Natural killer cell (primary cell): ENCODE measurements at regions of chr11 and their contacts with region 1.

Region 1: DNA sequence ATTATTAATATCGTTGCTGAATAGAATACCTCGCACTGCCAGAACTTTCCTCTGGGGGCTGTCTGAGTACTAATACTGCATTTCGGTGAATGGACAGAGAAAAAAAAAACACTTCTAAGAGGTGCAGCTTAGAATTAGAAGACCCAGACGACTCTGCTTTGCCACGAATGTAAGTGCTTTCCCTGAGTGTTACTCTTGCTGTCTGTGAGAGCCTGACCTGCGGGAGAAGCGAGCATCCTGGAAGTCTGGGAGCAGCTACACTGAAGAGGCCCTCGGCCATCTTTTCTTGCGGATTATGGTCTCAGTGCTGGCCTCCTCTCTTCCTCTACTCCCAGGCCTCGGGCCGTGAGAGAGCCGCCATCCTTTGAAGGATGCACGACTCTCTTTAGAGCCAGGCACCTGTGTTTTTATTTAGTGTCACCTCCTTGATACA is 94.9 kb downstream of the SCN3B start:
- DNase-seq: no peak
- ATAC-seq: peak in 2 of 3 donors; percentile 29 to 37
- H3K4me3 ChIP-seq: no peak overlapping the region
- H3K4me3 Mint-ChIP-seq: peak overlapping the region; percentile 87
- H3K27ac ChIP-seq: no peak overlapping the region
- H3K27ac Mint-ChIP-seq: peak overlapping the region; percentile 2 to 12
- H3K4me1 ChIP-seq: peaks cover 16% of the 10 kb centered on the region
- H3K4me1 Mint-ChIP-seq: peaks cover 13 to 14% of the 10 kb centered on the region in 2 donors
- H3K27me3 ChIP-seq: no peaks in the 10 kb centered on the region
- H3K27me3 Mint-ChIP-seq: peaks cover 0 to 21% of the 10 kb centered on the region in 2 donors
- CTCF ChIP-seq: no peak

Region 2: GRCh38 chr11:123511037-123511870 is 48.3 kb before region 1 on chr11:
- intact Hi-C with region 1: loop called (anchors 5 kb)
- DNase-seq: peak; percentile 55 to 81
- ATAC-seq: peak; percentile 85 to 98 (median 87)
- H3K4me3 ChIP-seq: no peak overlapping the region
- H3K4me3 Mint-ChIP-seq: no peak overlapping the region
- H3K27ac ChIP-seq: no peak overlapping the region
- H3K27ac Mint-ChIP-seq: no peak overlapping the region
- H3K4me1 ChIP-seq: peaks cover 3% of the 10 kb centered on the region
- H3K4me1 Mint-ChIP-seq: peaks cover 0 to 14% of the 10 kb centered on the region in 2 donors
- H3K27me3 ChIP-seq: no peaks in the 10 kb centered on the region
- H3K27me3 Mint-ChIP-seq: peaks cover 0 to 4% of the 10 kb centered on the region in 2 donors
- CTCF ChIP-seq: peak; percentile 82

Region 3: GRCh38 chr11:123654566-123655081 is 95.1 kb after region 1 on chr11 and contains the start of gene SCN3B:
- intact Hi-C with region 1: no loop called
- DNase-seq: no peak
- ATAC-seq: peak in 2 of 3 donors; percentile 41 to 45
- H3K4me3 ChIP-seq: peak within 1 kb of the TSS; percentile 25
- H3K4me3 Mint-ChIP-seq: peak within 1 kb of the TSS; percentile 61
- H3K27ac ChIP-seq: no peak within 1 kb of the TSS
- H3K27ac Mint-ChIP-seq: no peak within 1 kb of the TSS
- H3K4me1 ChIP-seq: peaks cover 13% of the 10 kb centered on the region
- H3K4me1 Mint-ChIP-seq: peaks cover 11 to 13% of the 10 kb centered on the region in 2 donors
- H3K27me3 ChIP-seq: peaks cover 25% of the 10 kb centered on the region
- H3K27me3 Mint-ChIP-seq: peaks cover 33 to 34% of the 10 kb centered on the region in 2 donors
- CTCF ChIP-seq: no peak
- total RNA-seq, gene SCN3B: not detected

Region 4: GRCh38 chr11:123773046-123773445 is 213.5 kb after region 1 on chr11:
- intact Hi-C with region 1: no loop called
- DNase-seq: no peak
- ATAC-seq: no peak
- H3K4me3 ChIP-seq: no peak overlapping the region
- H3K4me3 Mint-ChIP-seq: no peak overlapping the region
- H3K27ac ChIP-seq: no peak overlapping the region
- H3K27ac Mint-ChIP-seq: no peak overlapping the region
- H3K4me1 ChIP-seq: no peaks in the 10 kb centered on the region
- H3K4me1 Mint-ChIP-seq: no peaks in the 10 kb centered on the region
- H3K27me3 ChIP-seq: peaks cover 3% of the 10 kb centered on the region
- H3K27me3 Mint-ChIP-seq: peaks cover 2 to 21% of the 10 kb centered on the region in 2 donors
- CTCF ChIP-seq: no peak